ENCODE measurements at regions of chr21 and their contacts with region 1.

Region 1: GRCh38 chr21:31580866-31581276 is 78.6 kb upstream of the SOD1 start:
- DNase-seq: peak in 1 of 2 experiments; percentile 85
- H3K4me3 ChIP-seq: no peak overlapping the region
- H3K27ac ChIP-seq: no peak overlapping the region
- H3K4me1 ChIP-seq: no peaks in the 10 kb centered on the region
- H3K27me3 ChIP-seq: no peaks in the 10 kb centered on the region
- CTCF ChIP-seq: peak; percentile 73 to 91 (median 86)
- EP300 ChIP-seq: no peak
- POLR2A ChIP-seq: no peak
- RAD21 ChIP-seq: peak; percentile 91 to 94

Region 2: DNA sequence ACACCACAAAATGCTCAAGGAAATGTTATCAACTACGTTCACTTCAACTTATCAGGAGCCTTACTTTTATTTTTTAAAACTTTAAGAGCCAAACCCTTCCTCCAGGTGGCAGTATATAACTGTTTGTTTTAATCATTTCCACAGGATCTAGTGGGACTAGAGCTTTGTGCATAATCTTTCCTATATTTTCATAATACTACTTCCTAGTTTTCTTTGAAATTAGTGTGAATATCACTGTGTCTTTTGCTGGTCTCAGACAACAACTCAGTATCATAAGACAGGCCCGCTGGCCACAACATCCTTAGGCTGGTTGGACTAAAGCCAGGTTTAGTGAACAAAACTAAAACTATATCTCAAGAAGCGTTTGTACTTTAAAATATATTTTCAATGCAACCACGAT is 382.3 kb before region 1 on chr21:
- CTCF ChIA-PET with region 1: interaction called, 21 read pairs
- POLR2A ChIA-PET with region 1: no interaction called
- DNase-seq: no peak
- H3K4me3 ChIP-seq: no peak overlapping the region
- H3K27ac ChIP-seq: no peak overlapping the region
- H3K4me1 ChIP-seq: peaks cover 0 to 6% (median 0%) of the 10 kb centered on the region in 4 experiments; a peak in 1 of 7 replicates
- H3K27me3 ChIP-seq: no peaks in the 10 kb centered on the region
- CTCF ChIP-seq: peak in 2 of 3 experiments; percentile 27 to 47; a peak in 2 of 4 replicates
- EP300 ChIP-seq: no peak
- POLR2A ChIP-seq: no peak
- RAD21 ChIP-seq: peak; percentile 58 to 72

Region 3: DNA sequence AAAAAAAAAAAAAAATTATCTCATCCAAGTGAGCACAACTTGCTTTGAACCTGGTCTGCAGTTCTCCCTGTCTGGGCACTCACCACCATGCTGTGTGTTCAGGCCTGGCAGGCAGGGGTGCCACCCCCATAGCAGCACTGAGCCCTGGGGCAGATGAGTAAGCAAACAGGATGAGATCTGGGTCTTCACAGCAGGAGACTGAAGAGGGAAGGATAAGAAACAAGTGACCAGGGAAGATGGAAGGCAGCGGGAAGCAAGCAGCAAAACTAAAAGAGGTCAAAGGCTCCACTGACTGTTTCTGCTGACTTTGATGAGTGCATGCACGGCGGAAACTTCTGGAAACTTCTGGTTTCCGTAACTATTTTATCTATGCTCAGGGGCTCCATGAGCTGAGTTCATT is 54.8 kb before region 1 on chr21:
- CTCF ChIA-PET with region 1: interaction called, 12 read pairs
- POLR2A ChIA-PET with region 1: no interaction called
- DNase-seq: no peak
- H3K4me3 ChIP-seq: no peak overlapping the region
- H3K27ac ChIP-seq: no peak overlapping the region
- H3K4me1 ChIP-seq: peaks cover 2 to 23% (median 9%) of the 10 kb centered on the region in 4 experiments; a peak in 6 of 7 replicates
- H3K27me3 ChIP-seq: no peaks in the 10 kb centered on the region
- CTCF ChIP-seq: no peak
- EP300 ChIP-seq: no peak
- POLR2A ChIP-seq: no peak
- RAD21 ChIP-seq: no peak

Region 4: GRCh38 chr21:31548688-31549087 is 32.2 kb before region 1 on chr21:
- CTCF ChIA-PET with region 1: interaction called, 38 read pairs
- POLR2A ChIA-PET with region 1: no interaction called
- DNase-seq: no peak
- H3K4me3 ChIP-seq: no peak overlapping the region
- H3K27ac ChIP-seq: no peak overlapping the region
- H3K4me1 ChIP-seq: peaks cover 5 to 14% (median 8%) of the 10 kb centered on the region in 4 experiments
- H3K27me3 ChIP-seq: no peaks in the 10 kb centered on the region
- CTCF ChIP-seq: peak in 2 of 3 experiments; percentile 28 to 45; a peak in 3 of 4 replicates
- EP300 ChIP-seq: no peak
- POLR2A ChIP-seq: no peak
- RAD21 ChIP-seq: peak; percentile 48 to 69

Region 5: GRCh38 chr21:31597683-31598082 is 16.8 kb after region 1 on chr21:
- CTCF ChIA-PET with region 1: interaction called, 35 read pairs
- POLR2A ChIA-PET with region 1: interaction called, 4 read pairs
- DNase-seq: no peak
- H3K4me3 ChIP-seq: no peak overlapping the region
- H3K27ac ChIP-seq: no peak overlapping the region
- H3K4me1 ChIP-seq: no peaks in the 10 kb centered on the region; a peak in 2 of 7 replicates
- H3K27me3 ChIP-seq: no peaks in the 10 kb centered on the region
- CTCF ChIP-seq: no peak
- EP300 ChIP-seq: no peak
- POLR2A ChIP-seq: no peak
- RAD21 ChIP-seq: no peak

Region 6: GRCh38 chr21:31683030-31683429 is 102.2 kb after region 1 on chr21:
- CTCF ChIA-PET with region 1: no interaction called
- POLR2A ChIA-PET with region 1: no interaction called
- DNase-seq: no peak
- H3K4me3 ChIP-seq: no peak overlapping the region
- H3K27ac ChIP-seq: no peak overlapping the region
- H3K4me1 ChIP-seq: no peaks in the 10 kb centered on the region
- H3K27me3 ChIP-seq: no peaks in the 10 kb centered on the region
- CTCF ChIP-seq: peak in 1 of 3 experiments; percentile 10; a peak in 1 of 4 replicates
- EP300 ChIP-seq: no peak
- POLR2A ChIP-seq: no peak
- RAD21 ChIP-seq: peak in 1 of 2 experiments; percentile 23; a peak in 2 of 4 replicates

Region 7: GRCh38 chr21:31846690-31847089 is 265.8 kb after region 1 on chr21:
- CTCF ChIA-PET with region 1: no interaction called
- POLR2A ChIA-PET with region 1: no interaction called
- DNase-seq: no peak
- H3K4me3 ChIP-seq: no peak overlapping the region
- H3K27ac ChIP-seq: no peak overlapping the region
- H3K4me1 ChIP-seq: peaks cover 0 to 6% (median 3%) of the 10 kb centered on the region in 4 experiments; a peak in 4 of 7 replicates
- H3K27me3 ChIP-seq: no peaks in the 10 kb centered on the region
- CTCF ChIP-seq: no peak
- EP300 ChIP-seq: no peak
- POLR2A ChIP-seq: no peak
- RAD21 ChIP-seq: no peak

Measured in H1 (cell line).